Ascending aorta (tissue), 2 donors: ENCODE measurements at regions of chr10 and their contacts with region 1.

Region 1: DNA sequence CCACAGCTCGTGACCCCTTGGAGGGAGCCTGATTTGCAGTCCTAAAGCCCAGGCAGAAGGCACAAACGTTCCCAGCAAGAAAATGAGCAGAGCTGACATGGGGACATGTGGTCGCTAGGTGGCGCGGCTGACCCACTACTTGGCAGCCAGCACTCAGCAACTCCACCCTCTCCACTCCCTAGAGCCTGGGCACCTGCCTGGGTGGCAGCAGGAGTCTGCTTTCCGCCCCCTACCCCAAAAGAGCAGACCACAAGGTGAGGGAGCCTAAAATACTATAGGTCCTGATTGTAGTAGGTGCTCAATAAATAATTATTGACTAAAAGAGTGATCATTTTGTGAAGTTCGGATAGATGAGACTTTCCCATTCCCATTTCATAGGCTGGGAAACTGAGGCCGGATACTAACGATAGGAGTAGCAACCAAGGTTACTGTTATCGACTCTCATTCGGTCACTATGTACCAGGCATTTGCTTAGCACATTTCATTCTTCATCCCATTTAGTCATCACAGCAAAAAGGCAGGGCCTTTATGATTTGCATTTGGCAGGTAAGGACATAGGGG is 57.4 kb downstream of the NEUROG3 start:
- DNase-seq: peak in 1 of 2 donors; percentile 76
- H3K4me3 ChIP-seq: no peak overlapping the region
- H3K27ac ChIP-seq: no peak overlapping the region
- H3K4me1 ChIP-seq: no peaks in the 10 kb centered on the region
- H3K27me3 ChIP-seq: no peaks in the 10 kb centered on the region
- CTCF ChIP-seq: peak; percentile 56 to 72 (median 64)

Region 2: GRCh38 chr10:69232252-69232651 is 283.5 kb before region 1 on chr10:
- intact Hi-C with region 1: no loop called
- DNase-seq: no peak
- H3K4me3 ChIP-seq: no peak overlapping the region
- H3K27ac ChIP-seq: no peak overlapping the region
- H3K4me1 ChIP-seq: no peaks in the 10 kb centered on the region
- H3K27me3 ChIP-seq: no peaks in the 10 kb centered on the region
- CTCF ChIP-seq: no peak

Region 3: GRCh38 chr10:69639291-69640195 is 123.8 kb after region 1 on chr10:
- intact Hi-C with region 1: loop called (anchors 1 kb)
- DNase-seq: peak in 1 of 2 donors; percentile 72
- H3K4me3 ChIP-seq: no peak overlapping the region
- H3K27ac ChIP-seq: no peak overlapping the region
- H3K4me1 ChIP-seq: peaks cover 0 to 4% of the 10 kb centered on the region in 2 donors
- H3K27me3 ChIP-seq: no peaks in the 10 kb centered on the region
- CTCF ChIP-seq: peak; percentile 70 to 86 (median 73)